ENCODE measurements at regions of chr5 and their contacts with region 1.

Region 1: GRCh38 chr5:159987031-159987674 is 21.8 kb upstream of the TTC1 start:
- DNase-seq: peak; percentile 47 to 85 (median 75)
- ATAC-seq: peak; percentile 93
- H3K4me3 ChIP-seq: peak overlapping the region; percentile 34 to 58
- H3K4me3 Mint-ChIP-seq: peak overlapping the region; percentile 75
- H3K27ac ChIP-seq: no peak overlapping the region
- H3K27ac Mint-ChIP-seq: no peak overlapping the region
- H3K4me1 ChIP-seq: no peaks in the 10 kb centered on the region
- H3K4me1 Mint-ChIP-seq: no peaks in the 10 kb centered on the region
- H3K27me3 ChIP-seq: peaks cover 0 to 8% of the 10 kb centered on the region in 2 experiments
- H3K27me3 Mint-ChIP-seq: peaks cover 31% of the 10 kb centered on the region
- CTCF ChIP-seq: peak; percentile 56

Region 2: DNA sequence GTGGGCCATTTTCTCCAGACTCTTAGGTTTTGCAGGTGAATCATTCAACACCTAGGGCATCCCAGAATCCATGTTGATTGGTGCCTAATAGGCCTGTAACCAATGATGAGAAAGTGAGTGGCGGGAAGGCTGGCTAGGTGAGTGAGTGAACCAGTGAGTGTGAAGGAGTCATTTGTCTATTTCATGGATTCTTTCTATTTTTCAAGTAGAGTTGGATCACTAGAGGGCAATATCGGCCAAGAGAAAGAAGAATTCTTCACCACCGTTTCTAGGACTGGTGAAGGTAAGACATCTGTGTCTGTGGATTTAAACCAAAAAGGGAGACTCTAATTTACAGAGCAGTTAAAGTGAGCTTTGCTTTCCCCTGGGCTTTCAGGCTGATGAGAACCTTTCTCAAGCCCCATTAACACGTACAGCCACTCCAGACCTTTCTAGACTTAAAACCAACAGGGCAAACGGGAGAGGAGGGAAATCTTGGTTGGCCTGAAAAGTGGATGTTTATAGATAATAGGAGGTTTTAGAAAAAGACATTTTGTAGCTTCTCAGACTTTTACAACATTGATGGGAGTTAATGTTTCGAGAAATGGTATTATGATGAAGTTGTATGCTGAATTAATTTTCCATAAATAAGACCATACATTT is 542.6 kb before region 1 on chr5:
- CTCF ChIA-PET with region 1: interaction called, 71 read pairs
- POLR2A ChIA-PET with region 1: no interaction called
- intact Hi-C with region 1: loop called in 1 of 2 experiments (anchors 1 kb)
- DNase-seq: peak in 2 of 9 experiments; percentile 30 to 64
- ATAC-seq: no peak
- H3K4me3 ChIP-seq: no peak overlapping the region
- H3K4me3 Mint-ChIP-seq: no peak overlapping the region
- H3K27ac ChIP-seq: no peak overlapping the region
- H3K27ac Mint-ChIP-seq: no peak overlapping the region
- H3K4me1 ChIP-seq: no peaks in the 10 kb centered on the region
- H3K4me1 Mint-ChIP-seq: no peaks in the 10 kb centered on the region
- H3K27me3 ChIP-seq: no peaks in the 10 kb centered on the region
- H3K27me3 Mint-ChIP-seq: no peaks in the 10 kb centered on the region
- CTCF ChIP-seq: no peak

Region 3: GRCh38 chr5:160001457-160001856 is 14.3 kb after region 1 on chr5:
- CTCF ChIA-PET with region 1: interaction called, 14 read pairs
- POLR2A ChIA-PET with region 1: interaction called, 3 read pairs
- intact Hi-C with region 1: no loop called
- DNase-seq: no peak
- ATAC-seq: no peak
- H3K4me3 ChIP-seq: no peak overlapping the region
- H3K4me3 Mint-ChIP-seq: no peak overlapping the region
- H3K27ac ChIP-seq: no peak overlapping the region
- H3K27ac Mint-ChIP-seq: no peak overlapping the region
- H3K4me1 ChIP-seq: no peaks in the 10 kb centered on the region
- H3K4me1 Mint-ChIP-seq: no peaks in the 10 kb centered on the region
- H3K27me3 ChIP-seq: peaks cover 0 to 2% of the 10 kb centered on the region in 2 experiments
- H3K27me3 Mint-ChIP-seq: peaks cover 34% of the 10 kb centered on the region
- CTCF ChIP-seq: no peak

Measured in CD8-positive, alpha-beta T cell (primary cell).